ENCODE measurements at regions of chr3 and their contacts with region 1.

Region 1: GRCh38 chr3:24185738-24186384 is 240.8 kb downstream of the NR1D2 start:
- DNase-seq: peak; percentile 63
- H3K4me3 Mint-ChIP-seq: no peak overlapping the region
- H3K27ac Mint-ChIP-seq: peak overlapping the region; percentile 80
- H3K4me1 Mint-ChIP-seq: no peaks in the 10 kb centered on the region
- H3K27me3 Mint-ChIP-seq: no peaks in the 10 kb centered on the region
- CTCF ChIP-seq: peak; percentile 74

Region 2: GRCh38 chr3:24088782-24089181 is 97.1 kb before region 1 on chr3:
- CTCF ChIA-PET with region 1: interaction called, 5 read pairs
- POLR2A ChIA-PET with region 1: no interaction called
- intact Hi-C with region 1: loop called (anchors 10 kb)
- DNase-seq: peak; percentile 53
- H3K4me3 Mint-ChIP-seq: no peak overlapping the region
- H3K27ac Mint-ChIP-seq: no peak overlapping the region
- H3K4me1 Mint-ChIP-seq: no peaks in the 10 kb centered on the region
- H3K27me3 Mint-ChIP-seq: no peaks in the 10 kb centered on the region
- CTCF ChIP-seq: peak; percentile 53

Region 3: DNA sequence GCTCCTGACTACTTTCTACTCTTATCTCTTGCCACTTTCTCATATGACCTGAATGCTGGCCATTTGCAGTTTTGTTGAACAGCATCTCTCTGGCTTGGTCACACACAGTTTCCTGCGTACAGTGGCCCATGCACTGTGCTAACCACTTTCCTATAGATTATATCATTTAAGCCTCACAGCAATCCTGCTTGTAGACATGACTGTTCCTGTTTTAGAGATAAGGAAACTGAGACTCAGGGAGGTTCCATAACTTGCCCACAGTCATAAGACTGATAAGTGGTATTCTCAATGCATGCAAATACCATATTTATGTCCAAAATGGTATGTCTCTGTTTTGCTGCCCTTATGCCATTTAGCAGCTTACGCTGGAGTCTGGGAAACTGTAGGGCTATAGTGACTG is 11.2 kb before region 1 on chr3:
- CTCF ChIA-PET with region 1: interaction called, 14 read pairs
- POLR2A ChIA-PET with region 1: no interaction called
- intact Hi-C with region 1: no loop called
- DNase-seq: no peak
- H3K4me3 Mint-ChIP-seq: no peak overlapping the region
- H3K27ac Mint-ChIP-seq: no peak overlapping the region
- H3K4me1 Mint-ChIP-seq: no peaks in the 10 kb centered on the region
- H3K27me3 Mint-ChIP-seq: no peaks in the 10 kb centered on the region
- CTCF ChIP-seq: no peak

Region 4: GRCh38 chr3:24232784-24233183 is 46.9 kb after region 1 on chr3:
- CTCF ChIA-PET with region 1: interaction called, 10 read pairs
- POLR2A ChIA-PET with region 1: interaction called, 3 read pairs
- intact Hi-C with region 1: no loop called
- DNase-seq: no peak
- H3K4me3 Mint-ChIP-seq: no peak overlapping the region
- H3K27ac Mint-ChIP-seq: no peak overlapping the region
- H3K4me1 Mint-ChIP-seq: peaks cover 22% of the 10 kb centered on the region
- H3K27me3 Mint-ChIP-seq: no peaks in the 10 kb centered on the region
- CTCF ChIP-seq: no peak

Region 5: GRCh38 chr3:24237971-24238767 is 52.3 kb after region 1 on chr3:
- CTCF ChIA-PET with region 1: interaction called, 10 read pairs
- POLR2A ChIA-PET with region 1: interaction called, 3 read pairs
- intact Hi-C with region 1: loop called (anchors 1 kb)
- DNase-seq: peak; percentile 85
- H3K4me3 Mint-ChIP-seq: no peak overlapping the region
- H3K27ac Mint-ChIP-seq: peak overlapping the region; percentile 91
- H3K4me1 Mint-ChIP-seq: peaks cover 40% of the 10 kb centered on the region
- H3K27me3 Mint-ChIP-seq: no peaks in the 10 kb centered on the region
- CTCF ChIP-seq: peak; percentile 65

Measured in MCF 10A (cell line).